ENCODE measurements at regions of chr10 and their contacts with region 1.

Region 1: DNA sequence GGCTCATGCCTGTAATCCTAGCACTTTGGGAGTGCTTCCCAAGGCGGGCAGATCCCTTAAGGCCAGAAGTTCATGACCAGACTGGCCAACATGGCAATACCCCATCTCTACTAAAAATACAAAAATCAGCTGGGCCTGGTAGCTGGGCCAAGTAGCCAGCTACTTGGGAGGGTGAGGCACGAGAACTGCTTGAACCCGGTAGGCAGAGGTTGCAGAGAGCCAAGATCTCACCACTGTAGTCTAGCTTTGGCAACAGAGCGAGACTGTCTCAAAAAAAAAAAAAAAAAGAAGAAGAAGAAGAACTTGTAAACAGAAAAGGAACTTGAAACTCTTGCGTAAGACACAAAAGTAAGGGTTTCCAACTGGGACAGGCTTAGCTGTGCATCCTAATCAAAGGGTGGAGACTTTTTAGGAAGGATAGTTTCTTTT is 5.6 kb upstream of the IFIT2 start:
- DNase-seq: no peak
- H3K4me3 ChIP-seq: no peak overlapping the region
- H3K4me3 Mint-ChIP-seq: no peak overlapping the region
- H3K27ac ChIP-seq: no peak overlapping the region
- H3K27ac Mint-ChIP-seq: peak overlapping the region in 1 of 7 donors; percentile 31
- H3K4me1 ChIP-seq: peaks cover 7% of the 10 kb centered on the region
- H3K4me1 Mint-ChIP-seq: peaks cover 5 to 12% (median 7%) of the 10 kb centered on the region in 4 donors
- H3K27me3 ChIP-seq: no peaks in the 10 kb centered on the region
- H3K27me3 Mint-ChIP-seq: no peaks in the 10 kb centered on the region

Region 2: DNA sequence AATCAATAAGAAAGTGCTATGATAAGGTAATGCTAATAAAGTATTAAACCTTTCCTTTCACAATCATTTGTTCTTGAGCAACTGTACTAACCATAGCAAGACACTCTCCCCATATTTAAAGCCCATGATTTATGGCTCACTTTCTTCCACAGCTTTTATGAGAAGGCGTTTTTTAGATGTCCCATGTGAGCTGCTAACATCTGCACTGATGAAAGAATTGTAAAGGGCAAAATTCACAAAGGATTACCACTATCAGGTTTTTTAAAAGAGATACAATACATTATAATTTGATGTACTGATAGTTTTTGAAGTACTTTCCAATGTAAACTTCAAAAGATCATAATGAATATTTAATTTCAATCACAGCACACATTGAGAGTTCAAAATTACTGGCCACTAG is 788.8 kb before region 1 on chr10:
- CTCF ChIA-PET with region 1: no interaction called
- POLR2A ChIA-PET with region 1: no interaction called
- intact Hi-C with region 1: no loop called
- DNase-seq: no peak
- H3K4me3 ChIP-seq: no peak overlapping the region
- H3K4me3 Mint-ChIP-seq: no peak overlapping the region
- H3K27ac ChIP-seq: no peak overlapping the region
- H3K27ac Mint-ChIP-seq: no peak overlapping the region
- H3K4me1 ChIP-seq: no peaks in the 10 kb centered on the region
- H3K4me1 Mint-ChIP-seq: no peaks in the 10 kb centered on the region
- H3K27me3 ChIP-seq: no peaks in the 10 kb centered on the region
- H3K27me3 Mint-ChIP-seq: no peaks in the 10 kb centered on the region

Region 3: GRCh38 chr10:89563861-89564478 is 267.7 kb after region 1 on chr10:
- CTCF ChIA-PET with region 1: interaction called, 3 read pairs
- POLR2A ChIA-PET with region 1: no interaction called
- intact Hi-C with region 1: loop called (anchors 1 kb)
- DNase-seq: peak in 4 of 5 donors; percentile 40 to 48 (median 44)
- H3K4me3 ChIP-seq: no peak overlapping the region
- H3K4me3 Mint-ChIP-seq: no peak overlapping the region
- H3K27ac ChIP-seq: no peak overlapping the region
- H3K27ac Mint-ChIP-seq: no peak overlapping the region
- H3K4me1 ChIP-seq: no peaks in the 10 kb centered on the region
- H3K4me1 Mint-ChIP-seq: no peaks in the 10 kb centered on the region
- H3K27me3 ChIP-seq: no peaks in the 10 kb centered on the region
- H3K27me3 Mint-ChIP-seq: peaks cover 8 to 11% of the 10 kb centered on the region in 2 donors

Measured in CD4-positive, alpha-beta memory T cell (primary cell).